Prostate gland (tissue), 2 donors: ENCODE measurements at regions of chrX and their contacts with region 1.

Region 1: DNA sequence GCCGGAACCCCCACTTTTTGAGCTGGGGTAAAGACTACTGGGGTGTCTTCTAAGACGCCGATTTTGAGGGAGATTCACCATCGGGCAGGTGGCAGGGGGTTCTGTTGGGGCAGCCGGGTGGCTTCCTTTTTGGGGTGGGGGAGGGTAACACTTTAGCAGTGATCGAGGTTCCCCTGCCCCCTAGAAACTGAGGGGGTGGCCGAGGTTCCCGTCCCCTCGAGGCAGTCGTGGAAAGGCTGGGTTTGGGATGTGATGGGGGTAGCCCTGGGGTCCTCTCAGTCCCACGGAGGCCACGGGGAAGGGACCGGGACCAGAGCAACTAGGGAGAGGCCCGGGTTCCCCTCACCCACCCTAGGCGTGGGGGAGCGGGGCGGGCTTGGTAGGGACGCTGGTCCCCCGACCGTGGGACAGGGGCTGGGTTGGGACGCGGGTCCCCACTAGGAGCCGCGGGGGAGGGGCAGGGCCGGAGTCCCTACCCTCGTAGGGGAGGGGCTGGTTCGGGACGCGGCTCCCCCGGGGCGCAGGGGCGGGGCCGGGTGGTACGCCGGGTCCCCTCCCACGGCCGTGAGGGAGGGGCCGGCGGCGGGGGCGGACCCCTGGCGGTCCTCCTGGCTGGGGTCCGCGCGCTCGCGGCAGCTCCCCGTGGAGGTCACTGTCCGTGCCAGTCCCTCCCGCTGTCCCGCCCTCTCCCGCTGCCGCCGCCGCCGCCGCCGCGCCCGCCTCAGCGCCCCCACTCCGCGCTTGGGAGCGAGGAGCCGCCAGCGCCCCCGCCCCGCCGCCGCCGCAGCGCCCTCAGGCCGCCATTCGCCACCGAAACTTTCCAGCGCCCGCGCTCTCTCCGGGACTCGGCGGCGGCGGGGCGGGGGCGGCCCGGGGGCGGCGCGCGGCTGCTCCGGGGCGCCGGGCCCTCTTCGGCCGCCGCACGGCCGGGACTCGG is at the start of gene TBL1X:
- DNase-seq: peak; percentile 31
- H3K4me3 ChIP-seq: peak within 1 kb of the TSS; percentile 51 to 53
- H3K27ac ChIP-seq: peak within 1 kb of the TSS; percentile 81 to 82
- H3K4me1 ChIP-seq: no peaks in the 10 kb centered on the region
- H3K27me3 ChIP-seq: no peaks in the 10 kb centered on the region
- CTCF ChIP-seq: no peak
- POLR2A ChIP-seq: peak; percentile 12
- total RNA-seq, gene TBL1X: 23.2 to 76.9 TPM

Region 2: DNA sequence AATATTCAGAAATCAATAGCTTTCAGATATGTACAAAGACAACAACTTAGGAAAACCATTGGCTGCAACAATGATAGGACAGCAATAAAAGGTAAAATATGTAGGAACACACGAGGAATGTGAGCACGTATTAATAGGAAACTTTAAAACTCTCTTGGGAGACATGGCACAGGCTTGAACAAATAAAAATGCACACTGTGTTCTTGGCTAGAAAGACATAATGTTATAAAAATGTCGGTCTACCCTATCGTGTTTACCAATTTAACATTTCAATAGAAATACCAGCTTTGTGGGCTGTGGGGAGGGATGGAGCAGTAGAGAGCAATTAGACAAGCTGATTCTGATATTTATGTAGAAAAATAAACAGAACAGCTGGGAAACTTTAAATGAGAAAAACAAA is 361.7 kb before region 1 on chrX:
- intact Hi-C with region 1: loop called (anchors 10 kb)
- DNase-seq: peak; percentile 10
- H3K4me3 ChIP-seq: no peak overlapping the region
- H3K27ac ChIP-seq: peak overlapping the region in 1 of 2 donors; percentile 41
- H3K4me1 ChIP-seq: no peaks in the 10 kb centered on the region
- H3K27me3 ChIP-seq: no peaks in the 10 kb centered on the region
- CTCF ChIP-seq: no peak
- POLR2A ChIP-seq: no peak

Region 3: DNA sequence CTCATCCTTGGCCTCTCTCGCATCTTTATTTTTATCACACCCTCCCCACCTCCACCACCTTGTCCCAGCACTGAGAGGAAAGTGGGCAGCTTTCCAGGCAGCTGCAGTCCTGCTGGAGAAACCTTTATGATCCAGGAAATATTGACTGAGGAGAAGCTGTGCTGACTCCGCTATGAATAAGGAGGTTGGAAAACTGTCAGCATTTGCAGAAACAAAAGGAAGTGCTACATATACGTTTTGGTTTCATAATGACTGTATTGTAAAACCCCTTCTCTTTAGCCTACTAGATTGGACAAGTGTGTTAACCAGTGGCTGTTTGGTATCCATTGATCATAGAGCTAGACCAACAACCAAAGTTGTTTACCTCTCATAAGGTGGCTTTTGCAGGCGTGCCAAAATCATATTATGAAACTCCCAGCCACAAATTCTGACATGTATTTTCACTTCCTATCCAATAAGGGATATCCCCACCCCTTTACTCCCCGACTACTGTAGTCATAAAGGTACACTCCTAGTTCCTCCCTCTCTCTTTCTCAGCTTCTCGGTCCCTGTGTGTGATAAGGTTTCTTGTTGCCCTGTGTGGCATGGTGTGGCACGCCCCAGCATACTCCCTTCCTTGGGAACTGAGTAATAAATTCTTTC is 212.5 kb after region 1 on chrX:
- intact Hi-C with region 1: loop called (anchors 10 kb)
- DNase-seq: peak; percentile 25
- H3K4me3 ChIP-seq: no peak overlapping the region
- H3K27ac ChIP-seq: no peak overlapping the region
- H3K4me1 ChIP-seq: no peaks in the 10 kb centered on the region
- H3K27me3 ChIP-seq: no peaks in the 10 kb centered on the region
- CTCF ChIP-seq: no peak
- POLR2A ChIP-seq: no peak